GM23248 (cell line): ENCODE measurements at regions of chr9 and their contacts with region 1.

Region 1: DNA sequence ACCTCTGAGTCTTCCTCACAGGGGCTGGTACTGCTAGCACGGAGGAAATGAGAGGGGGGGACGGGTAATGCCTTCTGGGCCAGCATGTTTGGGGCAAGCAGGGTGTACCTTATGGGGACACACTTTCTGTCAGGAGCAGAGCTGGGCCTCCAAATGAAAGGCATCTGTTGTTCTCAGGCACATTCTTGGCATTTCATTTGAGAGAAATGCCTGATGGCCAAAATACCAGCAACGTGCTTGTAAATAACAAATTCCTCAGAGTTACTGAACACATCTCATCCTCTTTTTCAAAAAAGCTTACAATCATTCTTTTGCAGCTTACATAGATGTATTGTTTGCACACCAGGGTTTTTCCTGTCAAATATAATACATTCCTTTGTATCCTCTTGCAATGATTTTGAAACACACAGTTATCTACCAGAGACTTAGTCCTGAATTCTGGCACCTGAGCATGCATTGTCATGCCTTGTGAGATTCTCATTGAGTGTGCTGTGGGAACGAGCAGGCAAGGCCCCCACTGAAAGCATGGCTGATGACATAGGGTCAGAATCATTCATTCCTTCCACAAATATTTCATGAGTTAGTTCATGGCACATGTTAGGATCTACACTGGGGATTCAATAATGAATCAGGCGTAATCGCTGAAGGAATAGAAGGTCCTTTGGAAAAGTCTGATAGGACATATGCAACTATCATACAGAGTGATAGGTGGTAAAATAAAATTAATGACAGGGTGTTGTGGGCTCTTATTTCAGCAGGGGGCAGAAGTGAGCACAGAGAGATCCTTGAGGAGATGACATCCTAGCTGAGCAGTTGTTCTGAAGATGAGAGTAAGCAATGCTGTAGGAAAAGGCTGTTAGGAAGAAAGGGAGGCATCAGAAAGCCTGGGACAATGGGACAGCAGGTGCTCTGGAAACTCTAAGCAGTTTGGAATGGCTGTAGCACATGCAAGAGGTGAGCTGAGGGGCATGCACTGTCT is 260.9 kb upstream of the TUT7 start:
- DNase-seq: peak; percentile 88
- H3K4me3 ChIP-seq: no peak overlapping the region
- H3K27ac ChIP-seq: peak overlapping the region; percentile 55
- H3K4me1 ChIP-seq: peaks cover 17% of the 10 kb centered on the region
- H3K27me3 ChIP-seq: no peaks in the 10 kb centered on the region

Region 2: DNA sequence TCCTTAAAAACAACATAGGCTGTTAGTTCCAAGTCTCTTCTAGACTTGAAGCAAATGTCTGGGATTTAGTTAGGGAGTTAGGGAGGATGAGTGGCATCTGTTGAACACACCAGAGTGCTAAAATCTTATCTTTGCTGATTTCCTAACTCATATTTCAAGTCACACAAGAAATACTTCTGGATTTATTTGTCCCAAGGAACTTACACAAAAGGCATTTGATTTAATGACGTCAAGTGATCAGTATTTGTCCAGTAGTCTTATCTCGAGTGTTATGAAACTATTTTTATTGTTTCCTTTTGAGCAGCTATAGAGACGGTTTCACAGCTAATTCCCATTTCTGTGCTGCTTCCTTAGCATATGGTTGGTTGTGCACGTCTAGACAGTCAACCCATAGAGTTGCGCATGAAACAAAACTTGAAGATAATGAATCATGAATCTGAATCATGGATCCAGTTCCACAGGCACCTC is 120.5 kb before region 1 on chr9:
- in situ Hi-C with region 1: loop called (anchors 10 kb)
- DNase-seq: peak; percentile 73
- H3K4me3 ChIP-seq: no peak overlapping the region
- H3K27ac ChIP-seq: peak overlapping the region; percentile 39
- H3K4me1 ChIP-seq: peaks cover 11% of the 10 kb centered on the region
- H3K27me3 ChIP-seq: no peaks in the 10 kb centered on the region